ENCODE measurements at regions of chr1 and their contacts with region 1.

Region 1: GRCh38 chr1:119367427-119368124 is 1.0 kb upstream of the HAO2 start:
- DNase-seq: peak in 1 of 42 donors; percentile 2

Region 2: DNA sequence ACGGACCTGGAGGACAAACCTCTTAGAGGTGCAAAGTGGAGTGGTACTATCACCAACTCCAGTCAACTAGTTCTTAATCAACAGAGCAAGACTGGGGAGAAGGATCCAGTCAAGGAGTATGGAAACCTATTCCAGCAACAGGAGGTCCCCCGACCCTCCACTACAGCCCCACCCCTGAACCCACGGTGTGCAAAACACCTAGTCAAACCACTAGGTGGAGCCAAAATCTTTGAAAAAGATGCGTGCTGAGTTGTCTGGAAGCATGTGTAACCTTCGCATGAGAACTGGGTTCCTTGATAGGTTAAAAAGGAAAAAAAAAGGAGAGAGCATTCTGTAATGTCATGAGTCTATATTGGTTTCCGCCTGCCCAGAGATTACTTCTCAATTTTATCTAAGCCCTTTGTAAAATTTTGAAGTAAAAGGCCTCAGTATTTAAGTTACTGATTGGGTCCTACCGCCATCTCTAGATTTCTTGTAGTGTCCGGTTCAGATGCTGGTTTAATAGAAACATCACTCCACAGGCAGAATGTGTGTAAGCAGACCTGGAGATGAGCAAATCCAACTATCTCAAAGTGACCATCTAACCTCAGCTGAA is 80.9 kb before region 1 on chr1:
- intact Hi-C with region 1: loop called (anchors 10 kb)
- DNase-seq: peak in 10 of 42 donors; percentile 8 to 49 (median 24)